Activated CD4-positive, alpha-beta T cell treated with anti-CD3 and anti-CD28 coated beads, Interleukin-2, amount 10 ng/mL, durations not matched to agents 7 days and 5 days (primary cell): ENCODE measurements at regions of chr6 and their contacts with region 1.

Region 1: DNA sequence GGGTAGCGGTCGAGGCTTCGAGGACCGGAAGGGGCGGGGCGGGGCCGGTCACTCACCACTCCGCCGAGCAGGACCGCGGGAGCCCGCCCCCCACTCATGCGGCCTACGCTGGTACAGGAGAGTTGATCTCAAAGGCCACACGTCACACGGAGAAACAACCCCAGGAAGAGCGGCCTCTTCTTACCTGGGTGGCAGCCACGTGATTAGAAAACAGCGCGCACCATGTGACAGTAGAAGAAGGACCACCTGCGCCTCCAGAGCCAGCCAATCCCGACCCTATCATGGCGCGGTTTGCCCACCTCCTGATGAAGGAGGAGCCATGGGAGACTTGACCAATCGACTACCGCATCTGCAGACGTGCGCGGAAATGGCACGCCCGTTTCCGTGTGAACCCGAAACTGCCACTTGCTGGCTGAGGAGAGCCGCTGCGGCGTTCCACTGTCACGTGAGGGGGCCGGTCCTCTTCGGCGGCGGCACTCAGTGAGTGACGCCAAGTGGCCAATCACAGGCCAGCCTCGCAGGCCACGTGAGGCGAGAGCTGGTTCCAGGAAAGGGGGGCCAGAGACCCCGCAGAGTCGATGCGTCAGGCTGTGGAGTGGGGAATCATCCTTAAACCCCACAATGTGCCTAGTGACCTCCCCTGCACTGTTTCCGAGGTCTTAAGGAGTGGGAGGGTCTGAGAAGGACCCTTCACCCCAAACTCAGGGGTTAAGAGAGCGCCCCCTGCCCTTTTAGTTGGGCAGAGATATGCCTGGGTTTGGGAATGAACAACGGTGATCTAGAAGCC is at the start of gene CUTA:
- DNase-seq: peak; percentile 100
- H3K4me3 Mint-ChIP-seq: peak within 1 kb of the TSS; percentile 95
- H3K27ac Mint-ChIP-seq: peak within 1 kb of the TSS; percentile 97
- H3K4me1 Mint-ChIP-seq: peaks cover 71% of the 10 kb centered on the region
- H3K27me3 Mint-ChIP-seq: peaks cover 3% of the 10 kb centered on the region
- total RNA-seq, gene CUTA: 191 to 207 TPM

Region 2: GRCh38 chr6:33430991-33431879 is 13.1 kb after region 1 on chr6:
- CTCF ChIA-PET with region 1: interaction called, 28 read pairs
- POLR2A ChIA-PET with region 1: no interaction called
- DNase-seq: peak; percentile 89
- H3K4me3 Mint-ChIP-seq: peak overlapping the region; percentile 83
- H3K27ac Mint-ChIP-seq: peak overlapping the region; percentile 93
- H3K4me1 Mint-ChIP-seq: peaks cover 67% of the 10 kb centered on the region
- H3K27me3 Mint-ChIP-seq: no peaks in the 10 kb centered on the region

Region 3: GRCh38 chr6:33454009-33454946 is 36.2 kb after region 1 on chr6 and contains the start of gene ZBTB9:
- CTCF ChIA-PET with region 1: no interaction called
- POLR2A ChIA-PET with region 1: no interaction called
- DNase-seq: peak; percentile 97
- H3K4me3 Mint-ChIP-seq: peak within 1 kb of the TSS; percentile 91
- H3K27ac Mint-ChIP-seq: peak within 1 kb of the TSS; percentile 90
- H3K4me1 Mint-ChIP-seq: peaks cover 27% of the 10 kb centered on the region
- H3K27me3 Mint-ChIP-seq: no peaks in the 10 kb centered on the region
- total RNA-seq, gene ZBTB9: 9.0 to 9.9 TPM